Sigmoid colon (tissue), 7 donors: ENCODE measurements at regions of chr4 and their contacts with region 1.

Region 1: GRCh38 chr4:44726262-44726871 is at the start of gene GNPDA2:
- DNase-seq: peak; percentile 95
- H3K4me3 ChIP-seq: peak within 1 kb of the TSS; percentile 59 to 90 (median 77)
- H3K27ac ChIP-seq: peak within 1 kb of the TSS; percentile 84 to 90 (median 87)
- H3K4me1 ChIP-seq: peaks cover 0 to 23% (median 15%) of the 10 kb centered on the region in 4 donors
- H3K27me3 ChIP-seq: no peaks in the 10 kb centered on the region
- CTCF ChIP-seq: no peak
- EP300 ChIP-seq: no peak
- POLR2A ChIP-seq: peak; percentile 18 to 27
- total RNA-seq, gene GNPDA2: 18.5 to 33.2 (median 25.4) TPM

Region 2: GRCh38 chr4:44678094-44679041 is 48.0 kb before region 1 on chr4 and contains the start of gene GUF1:
- intact Hi-C with region 1: loop called (anchors 5 kb)
- DNase-seq: peak; percentile 95
- H3K4me3 ChIP-seq: peak within 1 kb of the TSS; percentile 59 to 82 (median 76)
- H3K27ac ChIP-seq: peak within 1 kb of the TSS; percentile 78 to 92 (median 88)
- H3K4me1 ChIP-seq: peaks cover 0 to 25% (median 18%) of the 10 kb centered on the region in 4 donors
- H3K27me3 ChIP-seq: no peaks in the 10 kb centered on the region
- CTCF ChIP-seq: no peak
- EP300 ChIP-seq: peak in 1 of 4 donors; percentile 49
- POLR2A ChIP-seq: peak in 1 of 2 donors; percentile 31
- total RNA-seq, gene GUF1: 10.9 to 18.0 (median 16.0) TPM